Prostate gland (tissue), 2 donors: ENCODE measurements at regions of chr16 and their contacts with region 1.

Region 1: GRCh38 chr16:68848786-68849185 is 5.5 kb downstream of the TANGO6 start:
- DNase-seq: no peak
- H3K4me3 ChIP-seq: no peak overlapping the region
- H3K27ac ChIP-seq: no peak overlapping the region
- H3K4me1 ChIP-seq: no peaks in the 10 kb centered on the region
- H3K27me3 ChIP-seq: no peaks in the 10 kb centered on the region
- CTCF ChIP-seq: no peak
- POLR2A ChIP-seq: no peak

Region 2: GRCh38 chr16:68921654-68922053 is 72.9 kb after region 1 on chr16:
- intact Hi-C with region 1: no loop called
- DNase-seq: no peak
- H3K4me3 ChIP-seq: no peak overlapping the region
- H3K27ac ChIP-seq: no peak overlapping the region
- H3K4me1 ChIP-seq: no peaks in the 10 kb centered on the region
- H3K27me3 ChIP-seq: no peaks in the 10 kb centered on the region
- CTCF ChIP-seq: no peak
- POLR2A ChIP-seq: no peak

Region 3: DNA sequence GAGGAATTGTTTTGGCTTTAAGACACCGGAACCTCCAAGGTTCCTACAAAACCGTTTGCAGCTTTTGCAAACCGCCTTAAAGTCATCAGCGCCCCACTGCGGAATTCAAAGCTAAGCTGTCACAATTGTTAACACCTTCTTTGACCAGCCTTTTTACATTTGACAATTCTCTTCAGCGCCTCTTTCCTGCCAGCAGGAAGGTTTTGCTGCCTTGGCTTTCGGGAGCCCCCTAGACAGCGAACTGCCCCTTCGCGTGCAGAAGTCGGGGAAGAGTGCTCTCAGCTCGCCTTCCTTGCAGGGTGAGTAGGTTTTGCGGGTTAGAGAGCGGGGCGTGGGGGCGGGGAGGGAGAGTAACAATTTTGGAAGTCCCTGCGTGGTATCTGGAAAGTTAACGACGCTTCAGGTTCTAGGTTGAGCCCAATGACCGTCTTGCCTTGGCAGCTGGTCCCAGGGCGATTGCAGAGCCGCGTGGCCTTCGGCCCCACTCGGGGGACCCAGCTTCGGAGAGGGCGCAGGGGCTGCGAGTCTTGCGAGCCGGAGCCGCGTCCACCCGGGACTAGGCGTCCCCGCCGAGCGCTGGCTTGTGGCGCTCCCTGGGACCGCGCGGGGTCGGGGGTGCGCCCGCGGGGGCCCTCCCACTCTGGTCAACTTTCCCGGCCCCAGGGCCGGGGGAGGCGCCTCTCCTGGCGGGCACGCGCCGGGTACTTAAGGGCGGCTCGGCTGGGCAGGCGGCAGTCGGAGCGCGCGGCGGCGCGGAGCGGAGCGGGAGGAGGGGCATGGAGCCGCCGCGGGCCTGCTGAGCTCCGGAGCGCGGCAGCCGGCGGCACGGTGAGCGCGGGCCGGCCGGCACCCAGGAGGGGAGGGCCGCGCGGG is 256.9 kb after region 1 on chr16 and contains the start of gene HAS3:
- intact Hi-C with region 1: loop called (anchors 5 kb)
- DNase-seq: peak; percentile 52
- H3K4me3 ChIP-seq: peak within 1 kb of the TSS; percentile 48 to 57
- H3K27ac ChIP-seq: peak within 1 kb of the TSS in 1 of 2 donors; percentile 39
- H3K4me1 ChIP-seq: peaks cover 15% of the 10 kb centered on the region
- H3K27me3 ChIP-seq: no peaks in the 10 kb centered on the region
- CTCF ChIP-seq: peak in 2 of 4 experiments; percentile 23 to 39
- POLR2A ChIP-seq: peak; percentile 56
- total RNA-seq, gene HAS3: 3.0 to 4.5 TPM